Caco-2 (cell line): ENCODE measurements at regions of chr15 and their contacts with region 1.

Region 1: DNA sequence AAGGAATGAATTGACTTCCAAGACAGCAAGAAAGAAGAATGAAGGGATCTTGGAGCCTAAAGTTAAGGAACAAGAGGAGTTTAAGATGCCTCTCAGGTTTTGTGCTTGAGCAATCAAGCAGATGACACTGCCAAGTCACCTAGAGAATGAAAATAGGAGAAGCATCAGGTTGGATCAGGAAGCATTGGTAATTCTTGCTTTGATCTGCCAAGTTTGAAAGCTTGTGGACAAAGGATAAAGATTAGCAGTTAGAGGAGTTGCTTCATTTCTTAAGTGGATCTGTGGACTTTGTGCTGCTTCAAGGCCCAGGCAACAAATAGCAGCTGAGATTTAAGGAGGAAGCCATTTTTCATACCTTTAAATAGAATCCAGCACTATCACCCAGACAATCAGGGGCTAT is 35.6 kb downstream of the FRMD5 start:
- DNase-seq: peak; percentile 51 to 63
- H3K4me3 ChIP-seq: no peak overlapping the region
- H3K4me3 Mint-ChIP-seq: peak overlapping the region; percentile 20
- H3K27ac Mint-ChIP-seq: peak overlapping the region; percentile 87
- H3K4me1 ChIP-seq: peaks cover 58% of the 10 kb centered on the region
- H3K4me1 Mint-ChIP-seq: peaks cover 35% of the 10 kb centered on the region
- H3K27me3 ChIP-seq: no peaks in the 10 kb centered on the region
- H3K27me3 Mint-ChIP-seq: no peaks in the 10 kb centered on the region
- CTCF ChIP-seq: no peak

Region 2: GRCh38 chr15:44045217-44045616 is 114.3 kb before region 1 on chr15:
- CTCF ChIA-PET with region 1: no interaction called
- POLR2A ChIA-PET with region 1: interaction called, 13 read pairs
- intact Hi-C with region 1: no loop called
- DNase-seq: no peak
- H3K4me3 ChIP-seq: no peak overlapping the region
- H3K4me3 Mint-ChIP-seq: no peak overlapping the region
- H3K27ac Mint-ChIP-seq: no peak overlapping the region
- H3K4me1 ChIP-seq: no peaks in the 10 kb centered on the region
- H3K4me1 Mint-ChIP-seq: no peaks in the 10 kb centered on the region
- H3K27me3 ChIP-seq: no peaks in the 10 kb centered on the region
- H3K27me3 Mint-ChIP-seq: no peaks in the 10 kb centered on the region
- CTCF ChIP-seq: no peak

Region 3: GRCh38 chr15:44195151-44195740 is 35.8 kb after region 1 on chr15 and contains the start of gene FRMD5:
- CTCF ChIA-PET with region 1: no interaction called
- POLR2A ChIA-PET with region 1: no interaction called
- intact Hi-C with region 1: loop called (anchors 1 kb)
- DNase-seq: peak; percentile 96 to 97
- H3K4me3 ChIP-seq: peak within 1 kb of the TSS; percentile 81
- H3K4me3 Mint-ChIP-seq: peak within 1 kb of the TSS; percentile 93
- H3K27ac Mint-ChIP-seq: peak within 1 kb of the TSS; percentile 89
- H3K4me1 ChIP-seq: peaks cover 12% of the 10 kb centered on the region
- H3K4me1 Mint-ChIP-seq: peaks cover 9% of the 10 kb centered on the region
- H3K27me3 ChIP-seq: no peaks in the 10 kb centered on the region
- H3K27me3 Mint-ChIP-seq: no peaks in the 10 kb centered on the region
- CTCF ChIP-seq: peak; percentile 18 to 44
- total RNA-seq, gene FRMD5: 17.4 and 19.5 TPM in 2 replicates